AG04450 (cell line): ENCODE measurements at regions of chr1 and their contacts with region 1.

Region 1: GRCh38 chr1:23657659-23658275 is 33.8 kb upstream of the RPL11 start:
- DNase-seq: no peak
- H3K4me3 ChIP-seq: no peak overlapping the region
- H3K27ac ChIP-seq: no peak overlapping the region
- H3K27me3 ChIP-seq: peaks cover 1% of the 10 kb centered on the region
- CTCF ChIP-seq: peak; percentile 84

Region 2: DNA sequence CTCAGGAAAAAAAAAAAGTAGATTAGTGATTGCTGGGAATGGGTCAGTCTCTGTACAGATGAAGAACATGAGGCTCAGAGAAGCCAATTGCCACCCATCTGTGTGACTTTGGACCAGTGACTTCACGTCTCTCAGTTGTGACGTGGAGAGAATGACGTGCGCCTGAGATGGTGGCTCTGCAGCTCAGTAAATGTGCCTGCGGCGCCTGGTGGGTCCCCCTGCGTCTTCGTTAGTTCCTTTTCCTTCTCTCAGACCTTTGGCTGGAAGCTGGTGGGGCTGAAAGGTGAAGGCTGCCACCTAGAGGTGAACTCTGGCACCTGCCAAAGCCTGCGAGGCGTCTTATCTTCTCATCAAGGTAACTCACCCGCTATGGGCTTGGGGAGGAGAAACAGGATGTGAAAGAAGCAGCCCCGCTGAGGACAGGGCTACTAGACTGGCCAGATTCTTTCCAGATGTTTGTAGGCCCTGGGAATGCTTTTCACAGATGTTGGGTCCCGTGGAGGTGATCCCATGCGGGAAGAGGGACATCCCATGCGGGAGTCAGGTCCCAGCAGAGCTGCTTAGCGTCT is 118.0 kb before region 1 on chr1:
- CTCF ChIA-PET with region 1: interaction called, 20 read pairs
- POLR2A ChIA-PET with region 1: no interaction called
- DNase-seq: peak; percentile 70
- H3K4me3 ChIP-seq: no peak overlapping the region
- H3K27ac ChIP-seq: no peak overlapping the region
- H3K27me3 ChIP-seq: no peaks in the 10 kb centered on the region
- CTCF ChIP-seq: peak; percentile 96

Region 3: DNA sequence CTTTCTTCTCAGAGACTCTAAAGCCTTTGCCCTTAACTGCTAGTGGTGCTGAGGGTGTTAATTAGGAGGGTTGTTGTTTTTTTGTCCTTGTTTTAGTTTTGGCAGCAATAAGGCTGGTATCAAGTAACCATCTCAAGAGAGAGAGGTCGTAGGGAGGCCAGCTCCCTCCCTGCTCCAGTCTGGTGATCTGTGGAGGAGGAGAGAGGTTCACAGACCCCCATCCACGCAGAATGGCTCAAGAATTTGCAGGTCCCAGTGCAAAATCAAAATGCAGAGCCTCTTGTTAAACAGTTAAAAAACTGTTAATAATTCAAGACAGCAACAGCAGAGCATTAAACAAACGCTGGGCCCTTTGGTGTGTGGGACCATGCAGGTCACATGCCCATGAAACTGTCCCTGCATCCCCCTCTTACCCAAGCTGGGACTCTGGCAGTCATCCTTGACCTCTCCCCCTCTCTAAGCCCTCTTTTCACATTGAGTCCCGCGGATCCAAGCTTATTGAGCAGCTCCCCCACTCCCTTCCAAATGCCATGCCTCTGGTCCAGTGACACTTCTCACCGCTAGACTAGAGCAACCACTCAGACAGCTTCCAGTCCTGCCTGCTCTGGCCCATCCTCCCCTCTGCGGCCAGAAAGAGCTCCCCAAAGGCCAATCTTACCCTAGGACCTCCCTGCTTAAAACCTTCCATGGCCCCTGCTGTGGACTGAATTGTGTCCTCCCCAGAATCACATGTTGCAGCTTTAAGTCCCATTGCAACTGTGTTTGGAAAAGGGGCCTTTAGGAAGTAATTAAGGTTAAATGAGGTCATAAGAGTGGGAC is 13.8 kb before region 1 on chr1:
- CTCF ChIA-PET with region 1: interaction called, 17 read pairs
- POLR2A ChIA-PET with region 1: no interaction called
- DNase-seq: no peak
- H3K4me3 ChIP-seq: no peak overlapping the region
- H3K27ac ChIP-seq: no peak overlapping the region
- H3K27me3 ChIP-seq: peaks cover 16% of the 10 kb centered on the region
- CTCF ChIP-seq: no peak

Region 4: GRCh38 chr1:23691499-23692307 is 33.9 kb after region 1 on chr1 and contains the start of gene RPL11:
- CTCF ChIA-PET with region 1: interaction called, 11 read pairs
- POLR2A ChIA-PET with region 1: no interaction called
- DNase-seq: peak; percentile 94
- H3K4me3 ChIP-seq: peak within 1 kb of the TSS; percentile 91
- H3K27ac ChIP-seq: peak within 1 kb of the TSS; percentile 87
- H3K27me3 ChIP-seq: no peaks in the 10 kb centered on the region
- CTCF ChIP-seq: peak; percentile 80
- polyA plus RNA-seq, gene RPL11: 1,898 and 2,055 TPM in 2 replicates

Region 5: DNA sequence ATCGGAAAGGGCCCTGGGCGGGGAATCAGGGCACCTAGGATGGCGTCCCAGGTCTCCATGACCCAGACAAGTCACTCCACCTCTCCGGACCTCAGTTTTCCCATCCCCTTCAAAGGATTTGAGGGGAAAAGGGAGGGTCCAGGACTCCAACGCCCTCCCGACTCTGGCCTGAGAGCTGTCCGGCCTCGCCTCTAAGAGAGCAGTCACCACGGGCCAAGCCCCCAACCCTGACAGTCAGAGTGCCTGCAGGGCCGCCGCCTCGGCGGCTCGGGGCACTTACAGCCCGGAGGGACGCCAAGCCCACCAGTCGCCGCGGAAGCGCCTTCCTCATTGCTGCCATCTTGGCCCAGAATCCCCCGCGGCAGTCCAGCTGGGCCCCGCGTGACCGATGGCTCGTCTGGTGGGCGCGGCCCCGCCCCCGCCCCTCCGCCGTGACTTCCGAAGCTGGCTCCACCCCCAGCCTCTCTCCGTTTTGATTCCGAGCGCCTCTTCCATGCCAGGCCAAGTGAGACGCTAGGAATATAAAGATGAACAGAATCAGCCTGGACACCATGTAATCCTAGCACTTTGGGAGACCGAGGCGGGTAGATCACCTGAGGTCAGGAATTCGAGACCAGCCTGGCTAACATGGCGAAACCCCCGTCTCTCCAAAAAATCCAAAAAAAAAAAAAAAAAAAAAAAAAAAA is 167.5 kb after region 1 on chr1 and contains the start of gene HMGCL:
- CTCF ChIA-PET with region 1: no interaction called
- POLR2A ChIA-PET with region 1: no interaction called
- DNase-seq: peak; percentile 50
- H3K4me3 ChIP-seq: peak within 1 kb of the TSS; percentile 95
- H3K27ac ChIP-seq: peak within 1 kb of the TSS; percentile 87
- H3K27me3 ChIP-seq: no peaks in the 10 kb centered on the region
- CTCF ChIP-seq: no peak
- polyA plus RNA-seq, gene HMGCL: 38.8 and 39.5 TPM in 2 replicates